ENCODE measurements at regions of chr21 and their contacts with region 1.

Region 1: GRCh38 chr21:24844671-24845070 is 762.6 kb downstream of the MRPL39 start:
- DNase-seq: no peak
- ATAC-seq: no peak
- H3K4me3 ChIP-seq: no peak overlapping the region
- H3K27ac ChIP-seq: no peak overlapping the region
- H3K4me1 ChIP-seq: no peaks in the 10 kb centered on the region
- H3K27me3 ChIP-seq: no peaks in the 10 kb centered on the region
- CTCF ChIP-seq: no peak
- EP300 ChIP-seq: no peak
- POLR2A ChIP-seq: no peak
- RAD21 ChIP-seq: no peak

Region 2: DNA sequence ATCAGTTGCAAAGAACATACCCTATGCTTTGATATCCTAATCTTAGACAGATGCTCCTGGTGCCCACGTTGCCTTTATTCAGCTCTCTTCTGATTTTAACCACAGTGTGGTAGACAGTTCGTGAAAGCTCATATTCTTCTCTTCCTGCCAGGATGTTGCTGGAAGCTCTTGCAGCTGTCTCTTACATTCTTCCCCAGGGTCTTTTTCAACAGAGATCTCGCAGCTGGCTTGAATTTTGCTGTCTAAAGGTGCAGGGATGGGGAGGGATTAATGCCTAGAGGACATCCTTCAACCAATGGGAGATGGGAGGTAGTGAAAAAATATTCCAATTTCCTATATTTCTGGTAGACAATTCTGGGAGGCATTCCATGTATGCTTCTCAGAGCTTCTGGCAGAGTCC is 1475.9 kb after region 1 on chr21:
- CTCF ChIA-PET with region 1: no interaction called
- POLR2A ChIA-PET with region 1: no interaction called
- in situ Hi-C with region 1: no loop called
- intact Hi-C with region 1: loop called (anchors 10 kb)
- DNase-seq: no peak
- ATAC-seq: no peak
- H3K4me3 ChIP-seq: no peak overlapping the region
- H3K27ac ChIP-seq: no peak overlapping the region
- H3K4me1 ChIP-seq: no peaks in the 10 kb centered on the region
- H3K27me3 ChIP-seq: no peaks in the 10 kb centered on the region
- CTCF ChIP-seq: no peak
- EP300 ChIP-seq: no peak
- POLR2A ChIP-seq: no peak
- RAD21 ChIP-seq: no peak